Left cardiac atrium (tissue), 4 donors: ENCODE measurements at regions of chr7 and their contacts with region 1.

Region 1: DNA sequence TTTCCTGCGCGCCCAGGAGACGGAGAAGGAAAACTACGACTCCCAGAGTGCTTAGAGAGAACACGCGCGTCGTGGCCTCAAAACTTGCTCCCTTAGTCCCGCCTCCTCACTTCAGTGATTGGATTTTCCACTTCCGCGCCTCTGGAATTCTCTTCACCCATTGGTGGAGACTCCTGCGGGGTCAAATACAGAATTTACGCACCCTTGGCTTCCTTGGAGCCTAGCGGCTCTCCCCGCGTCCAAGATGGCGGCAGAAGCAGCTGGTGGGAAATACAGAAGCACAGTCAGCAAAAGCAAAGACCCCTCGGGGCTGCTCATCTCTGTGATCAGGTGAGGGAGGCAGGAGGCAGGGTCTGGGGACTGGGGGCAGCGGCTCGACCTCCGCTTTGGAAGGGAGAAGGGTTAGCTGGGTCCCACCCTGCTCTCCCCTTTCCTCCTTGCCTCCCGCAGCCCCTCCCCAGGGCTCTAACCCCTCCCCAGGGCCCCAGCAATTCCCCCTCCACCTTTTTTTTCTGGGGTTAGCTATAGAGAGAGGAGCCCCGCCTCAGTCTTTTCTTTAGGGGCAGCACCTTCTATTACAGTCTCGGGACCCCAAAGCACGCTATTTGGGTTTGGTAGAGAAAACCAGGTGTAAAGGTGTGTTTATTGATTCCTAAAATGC is at the start of gene EXOC4:
- DNase-seq: peak; percentile 91
- ATAC-seq: peak; percentile 100
- total RNA-seq, gene EXOC4: 33.7 to 41.5 TPM

Region 2: DNA sequence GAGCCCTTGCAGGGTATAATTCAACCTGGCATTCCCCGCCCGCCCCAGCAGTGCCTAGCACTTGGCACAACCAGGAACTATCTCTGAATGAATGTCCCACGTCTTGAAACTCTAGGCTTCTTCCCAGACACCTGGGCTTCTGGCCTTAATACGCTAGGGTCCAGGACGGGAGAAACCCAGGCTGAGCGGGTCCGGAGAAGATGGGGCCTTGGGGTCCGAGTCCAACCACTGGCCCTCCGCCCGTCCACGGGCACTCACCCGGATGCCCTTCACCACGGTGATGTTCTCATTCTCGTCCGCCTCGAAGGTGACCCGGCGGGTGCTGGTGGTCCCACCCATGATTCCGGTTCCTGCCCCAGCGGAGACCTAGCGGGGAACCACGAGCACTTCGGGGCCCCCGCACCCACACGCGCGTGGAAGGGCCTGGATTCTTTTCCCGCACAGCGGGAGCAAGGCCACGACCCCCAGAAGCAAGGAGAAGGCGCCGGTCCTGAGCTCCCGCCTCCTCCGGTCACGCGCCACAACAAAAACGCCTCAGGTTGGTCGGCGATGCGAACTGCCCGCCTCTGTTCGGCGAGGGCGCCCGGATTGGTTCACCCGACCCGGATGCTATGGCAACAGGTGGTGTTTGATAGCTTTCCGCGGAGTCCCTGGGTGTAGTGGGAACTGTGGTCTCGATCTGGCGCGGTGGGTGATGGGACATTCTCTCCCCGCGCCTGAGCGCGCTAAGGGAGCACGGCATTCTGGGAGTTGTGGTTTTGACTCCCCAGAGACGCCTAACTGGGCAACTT is 171.2 kb before region 1 on chr7 and contains the start of gene CHCHD3:
- intact Hi-C with region 1: loop called in 1 of 2 experiments (anchors 10 kb)
- DNase-seq: peak; percentile 98
- ATAC-seq: peak; percentile 100
- total RNA-seq, gene CHCHD3: 127 to 145 TPM